Gastrocnemius medialis (tissue), 4 donors: ENCODE measurements at regions of chr5 and their contacts with region 1.

Region 1: GRCh38 chr5:148443998-148444397 is 60.2 kb downstream of the FBXO38 start:
- DNase-seq: peak in 1 of 2 donors; percentile 7
- ATAC-seq: peak; percentile 83 to 91
- H3K4me3 ChIP-seq: no peak overlapping the region
- H3K27ac ChIP-seq: no peak overlapping the region
- H3K4me1 ChIP-seq: no peaks in the 10 kb centered on the region
- H3K27me3 ChIP-seq: no peaks in the 10 kb centered on the region
- CTCF ChIP-seq: peak; percentile 57 to 77 (median 72)
- POLR2A ChIP-seq: no peak

Region 2: DNA sequence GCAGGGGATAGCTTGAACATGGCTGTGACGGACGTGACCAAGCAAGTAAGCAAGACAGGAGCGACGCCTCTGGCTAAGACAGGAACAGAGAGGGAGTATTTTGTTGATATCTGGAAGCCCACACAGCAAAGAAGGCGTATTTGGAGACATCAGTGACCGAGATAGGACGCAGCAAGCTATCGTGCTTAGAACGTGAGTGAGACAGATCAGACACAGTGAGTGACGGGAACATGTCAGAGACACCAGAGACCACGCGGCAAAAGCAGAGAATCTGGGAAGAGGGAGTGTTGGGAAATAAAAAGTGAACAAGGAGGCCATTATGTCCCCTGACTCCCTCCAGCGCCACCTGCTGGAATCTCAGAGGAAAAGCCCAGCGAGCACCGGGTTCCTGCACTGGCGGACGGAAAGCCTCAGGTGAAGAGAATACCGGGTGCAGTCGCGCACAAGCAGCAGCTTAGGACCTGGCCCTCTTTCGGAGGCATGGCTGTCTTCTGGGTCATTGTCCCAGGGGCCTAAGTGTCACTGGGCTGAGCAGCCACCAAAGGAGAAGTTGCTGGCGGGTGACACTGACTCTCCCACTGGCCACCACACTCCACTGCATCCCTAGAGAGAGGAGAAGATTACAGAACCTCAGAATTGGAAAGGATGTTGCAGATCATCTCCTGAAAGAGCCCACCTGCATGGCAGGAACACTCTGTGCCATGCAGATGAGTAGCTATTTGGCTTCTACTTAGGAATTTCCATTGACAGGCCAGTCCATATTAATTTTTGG is 38.9 kb after region 1 on chr5:
- in situ Hi-C with region 1: no loop called
- intact Hi-C with region 1: loop called (anchors 2 kb)
- DNase-seq: peak in 1 of 2 donors; percentile 17
- ATAC-seq: peak in 1 of 2 donors; percentile 51
- H3K4me3 ChIP-seq: no peak overlapping the region
- H3K27ac ChIP-seq: no peak overlapping the region
- H3K4me1 ChIP-seq: no peaks in the 10 kb centered on the region
- H3K27me3 ChIP-seq: no peaks in the 10 kb centered on the region
- CTCF ChIP-seq: peak in 4 of 5 experiments; percentile 18 to 66 (median 42)
- POLR2A ChIP-seq: no peak

Region 3: GRCh38 chr5:149228618-149229297 is 784.8 kb after region 1 on chr5:
- in situ Hi-C with region 1: loop called in 1 of 4 experiments (anchors 25 kb)
- intact Hi-C with region 1: no loop called
- DNase-seq: peak; percentile 53 to 69
- ATAC-seq: peak; percentile 99
- H3K4me3 ChIP-seq: no peak overlapping the region
- H3K27ac ChIP-seq: peak overlapping the region; percentile 17 to 70 (median 52)
- H3K4me1 ChIP-seq: peaks cover 14 to 17% of the 10 kb centered on the region in 2 donors
- H3K27me3 ChIP-seq: no peaks in the 10 kb centered on the region
- CTCF ChIP-seq: peak; percentile 75 to 92 (median 82)
- POLR2A ChIP-seq: no peak